ENCODE measurements at regions of chr5 and their contacts with region 1.

Region 1: GRCh38 chr5:37005946-37006540 is 129.5 kb downstream of the NIPBL start:
- DNase-seq: peak; percentile 28
- H3K4me3 ChIP-seq: no peak overlapping the region; a peak in 1 of 4 replicates
- H3K27ac ChIP-seq: peak overlapping the region in 1 of 2 experiments; percentile 73; a peak in 2 of 4 replicates
- H3K4me1 ChIP-seq: no peaks in the 10 kb centered on the region; a peak in 1 of 4 replicates
- H3K27me3 ChIP-seq: no peaks in the 10 kb centered on the region
- CTCF ChIP-seq: peak; percentile 82
- EP300 ChIP-seq: no peak
- RAD21 ChIP-seq: peak; percentile 59

Region 2: DNA sequence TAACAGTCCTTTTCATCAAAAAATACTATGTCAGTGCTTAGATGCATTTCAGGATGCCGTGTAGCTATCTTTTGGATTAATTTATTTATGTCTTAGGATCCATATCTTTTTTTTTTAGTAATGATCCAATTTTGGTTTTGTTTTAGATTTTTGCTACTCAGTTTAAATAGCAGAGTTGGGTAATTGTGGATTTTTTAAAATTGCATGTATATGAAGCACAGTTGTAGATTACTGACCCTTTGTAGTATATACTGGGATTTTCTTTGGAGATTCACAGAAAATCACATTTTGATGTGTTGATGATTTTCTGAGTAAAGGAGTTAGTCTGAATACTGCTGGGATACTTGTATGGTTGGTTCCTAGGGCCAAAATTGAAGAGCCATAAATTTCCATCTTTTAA is 17.6 kb before region 1 on chr5:
- CTCF ChIA-PET with region 1: interaction called, 50 read pairs
- POLR2A ChIA-PET with region 1: no interaction called
- DNase-seq: no peak
- H3K4me3 ChIP-seq: no peak overlapping the region
- H3K27ac ChIP-seq: no peak overlapping the region
- H3K4me1 ChIP-seq: no peaks in the 10 kb centered on the region; a peak in 1 of 4 replicates
- H3K27me3 ChIP-seq: no peaks in the 10 kb centered on the region
- CTCF ChIP-seq: no peak
- EP300 ChIP-seq: no peak
- RAD21 ChIP-seq: no peak